ENCODE measurements at regions of chrX and their contacts with region 1.

Region 1: GRCh38 chrX:129754056-129755024 is 15.6 kb downstream of the XPNPEP2 start:
- DNase-seq: peak; percentile 42
- H3K4me3 Mint-ChIP-seq: no peak overlapping the region
- H3K27ac Mint-ChIP-seq: peak overlapping the region; percentile 53
- H3K4me1 Mint-ChIP-seq: peaks cover 73% of the 10 kb centered on the region
- H3K27me3 Mint-ChIP-seq: no peaks in the 10 kb centered on the region

Region 2: GRCh38 chrX:129637217-129638109 is 116.9 kb before region 1 on chrX:
- CTCF ChIA-PET with region 1: interaction called, 44 read pairs
- DNase-seq: peak; percentile 81
- H3K4me3 Mint-ChIP-seq: no peak overlapping the region
- H3K27ac Mint-ChIP-seq: no peak overlapping the region
- H3K4me1 Mint-ChIP-seq: peaks cover 7% of the 10 kb centered on the region
- H3K27me3 Mint-ChIP-seq: peaks cover 10% of the 10 kb centered on the region

Region 3: DNA sequence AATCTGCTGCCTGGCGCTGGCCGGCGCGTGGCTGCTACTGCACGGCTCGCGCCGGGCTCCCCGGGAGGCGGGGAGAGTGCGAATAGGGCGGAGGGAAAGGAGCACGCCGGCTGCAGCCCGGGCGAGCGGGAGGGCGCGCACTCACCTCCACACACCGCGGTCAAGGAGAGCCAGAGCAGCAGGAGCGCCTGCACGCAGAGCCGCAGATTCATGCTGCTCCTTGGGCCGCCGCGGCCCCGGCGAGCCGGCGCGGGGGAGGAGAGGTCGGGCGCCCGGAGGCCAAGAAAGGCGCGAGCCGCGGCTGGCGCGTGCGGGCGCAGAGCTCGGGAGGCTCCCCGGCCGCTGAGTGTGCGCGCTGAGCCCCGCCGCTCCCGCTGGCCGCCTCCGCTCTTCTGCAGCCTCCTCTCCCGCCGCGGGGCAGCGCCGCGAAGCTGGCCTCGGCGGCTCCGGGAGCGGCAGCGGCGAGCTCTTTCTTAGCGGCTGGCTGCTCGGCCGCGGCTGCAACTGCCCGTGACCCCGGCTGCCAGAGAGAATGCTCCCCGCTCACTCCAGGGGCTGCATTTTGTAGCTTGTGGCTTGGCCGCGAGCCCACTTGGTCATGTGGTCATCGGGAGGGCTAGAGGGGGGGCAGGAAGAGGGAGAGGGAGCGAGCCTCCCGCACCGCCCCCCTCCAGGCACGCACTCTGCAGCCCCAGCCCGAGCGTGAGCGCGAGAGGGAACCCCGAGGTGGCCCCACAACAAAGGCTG is 99.7 kb before region 1 on chrX and contains the start of gene APLN:
- CTCF ChIA-PET with region 1: interaction called, 16 read pairs
- DNase-seq: peak; percentile 48
- H3K4me3 Mint-ChIP-seq: peak within 1 kb of the TSS; percentile 66
- H3K27ac Mint-ChIP-seq: no peak within 1 kb of the TSS
- H3K4me1 Mint-ChIP-seq: peaks cover 14% of the 10 kb centered on the region
- H3K27me3 Mint-ChIP-seq: peaks cover 60% of the 10 kb centered on the region

Region 4: GRCh38 chrX:129726307-129727111 is 27.8 kb before region 1 on chrX:
- CTCF ChIA-PET with region 1: interaction called, 37 read pairs
- DNase-seq: peak; percentile 38
- H3K4me3 Mint-ChIP-seq: no peak overlapping the region
- H3K27ac Mint-ChIP-seq: peak overlapping the region; percentile 52
- H3K4me1 Mint-ChIP-seq: peaks cover 61% of the 10 kb centered on the region
- H3K27me3 Mint-ChIP-seq: no peaks in the 10 kb centered on the region

Region 5: DNA sequence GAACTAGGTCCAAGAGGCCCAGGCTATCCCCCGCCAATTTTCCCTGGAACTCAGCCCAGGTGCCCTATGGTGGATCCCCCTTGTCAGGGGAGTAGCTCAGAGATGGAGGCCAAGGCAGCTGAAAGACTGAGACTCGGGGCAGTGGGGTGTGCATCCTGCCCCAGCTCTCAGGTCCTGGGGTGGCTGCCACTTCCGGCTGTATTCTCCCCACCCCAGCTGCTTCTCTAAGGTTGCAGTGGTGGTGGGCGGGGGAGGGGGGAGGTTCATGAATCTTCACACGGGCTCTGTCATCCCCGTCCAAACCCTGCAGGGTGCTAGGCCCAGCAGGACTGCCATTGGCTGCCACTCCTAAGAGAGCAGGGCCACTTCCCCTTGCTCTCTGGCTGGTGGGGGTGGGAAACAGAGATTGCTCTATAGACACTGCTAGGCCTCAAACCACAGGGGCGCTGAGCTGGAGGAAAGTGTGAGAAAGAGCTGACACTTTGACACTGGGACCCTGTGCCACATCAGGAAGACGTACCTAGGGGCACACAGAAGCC is 26.9 kb after region 1 on chrX:
- CTCF ChIA-PET with region 1: interaction called, 39 read pairs
- DNase-seq: peak; percentile 89
- H3K4me3 Mint-ChIP-seq: peak overlapping the region; percentile 94
- H3K27ac Mint-ChIP-seq: peak overlapping the region; percentile 94
- H3K4me1 Mint-ChIP-seq: peaks cover 72% of the 10 kb centered on the region
- H3K27me3 Mint-ChIP-seq: no peaks in the 10 kb centered on the region

Region 6: DNA sequence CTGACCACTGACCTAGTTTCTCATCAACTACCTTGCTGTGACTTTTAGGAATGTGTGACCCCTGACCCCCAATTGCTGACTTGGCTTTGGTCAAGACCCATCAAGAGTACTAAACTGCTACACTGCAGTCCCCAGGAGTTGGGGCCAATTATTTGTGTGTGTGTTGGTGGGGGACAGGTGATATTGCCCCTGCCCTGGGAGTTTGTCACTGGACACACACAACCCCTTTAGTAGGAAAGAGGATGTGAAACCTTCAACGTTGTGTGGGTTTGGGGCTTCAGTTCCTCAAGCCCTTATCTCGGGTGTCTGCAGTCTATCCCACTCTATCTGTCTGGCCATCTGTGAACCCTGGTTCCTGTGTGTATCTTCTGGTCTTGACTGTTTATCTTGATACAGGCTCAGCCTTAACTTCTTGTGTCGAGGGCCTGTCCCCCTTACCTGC is 31.9 kb after region 1 on chrX:
- CTCF ChIA-PET with region 1: interaction called, 39 read pairs
- DNase-seq: no peak
- H3K4me3 Mint-ChIP-seq: peak overlapping the region; percentile 66
- H3K27ac Mint-ChIP-seq: peak overlapping the region; percentile 77
- H3K4me1 Mint-ChIP-seq: peaks cover 58% of the 10 kb centered on the region
- H3K27me3 Mint-ChIP-seq: no peaks in the 10 kb centered on the region

Region 7: DNA sequence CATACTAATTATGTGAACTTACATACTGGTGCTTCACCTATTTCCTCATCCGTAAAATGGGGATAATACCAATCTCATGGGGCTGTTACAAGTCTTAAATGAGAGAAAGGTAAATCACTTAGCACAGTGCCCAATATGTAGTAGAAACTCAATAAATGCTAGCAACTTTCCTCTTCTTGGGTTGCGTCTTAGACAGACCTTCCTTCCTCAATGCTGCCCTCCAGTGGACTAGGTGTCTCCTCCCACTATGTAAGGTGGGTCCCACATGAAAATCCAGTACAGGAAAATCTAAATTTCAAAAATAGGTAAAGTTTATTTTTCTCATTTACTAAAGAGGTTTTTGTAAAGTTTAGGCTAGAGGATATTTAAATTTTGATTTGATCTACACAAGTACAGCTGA is 68.8 kb after region 1 on chrX:
- CTCF ChIA-PET with region 1: interaction called, 28 read pairs
- DNase-seq: peak; percentile 65
- H3K4me3 Mint-ChIP-seq: no peak overlapping the region
- H3K27ac Mint-ChIP-seq: no peak overlapping the region
- H3K4me1 Mint-ChIP-seq: peaks cover 21% of the 10 kb centered on the region
- H3K27me3 Mint-ChIP-seq: no peaks in the 10 kb centered on the region